ENCODE measurements at regions of chr3 and their contacts with region 1.

Region 1: DNA sequence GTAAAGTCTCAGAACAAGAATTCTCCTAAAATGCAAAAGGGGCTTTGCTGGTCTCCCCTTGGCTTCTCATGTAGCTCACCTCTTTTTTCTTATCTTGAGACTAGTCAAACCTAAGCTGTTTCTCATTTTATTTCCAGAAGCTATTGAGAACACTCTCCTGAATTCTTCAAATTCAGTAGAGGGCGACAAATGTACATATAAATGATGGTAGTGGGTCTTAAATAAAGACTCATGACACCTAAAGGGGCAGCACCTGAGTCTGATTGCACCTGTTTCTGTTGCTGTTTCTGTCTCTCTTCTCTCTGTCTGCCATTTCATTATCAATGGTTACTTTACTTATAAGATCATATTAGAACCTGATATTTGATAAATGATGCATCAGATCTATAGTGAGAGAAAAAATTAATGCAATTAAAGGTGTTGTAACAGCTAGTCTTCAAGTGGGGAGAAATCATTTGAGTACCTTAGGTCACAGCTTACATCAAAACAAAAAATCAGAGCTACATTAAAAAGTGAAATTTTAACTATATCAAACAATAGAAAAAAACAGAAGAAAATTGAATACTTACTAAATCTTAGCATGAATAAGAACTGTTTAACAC is 7.0 kb downstream of the ADIPOQ start:
- DNase-seq: no peak
- ATAC-seq: peak; percentile 67

Region 2: GRCh38 chr3:186920301-186920700 is 70.8 kb after region 1 on chr3:
- intact Hi-C with region 1: loop called (anchors 10 kb)
- DNase-seq: no peak
- ATAC-seq: no peak

Region 3: GRCh38 chr3:187164885-187165543 is 315.5 kb after region 1 on chr3:
- intact Hi-C with region 1: loop called (anchors 5 kb)
- DNase-seq: no peak
- ATAC-seq: peak; percentile 34